SK-N-SH (cell line): ENCODE measurements at regions of chr17 and their contacts with region 1.

Region 1: DNA sequence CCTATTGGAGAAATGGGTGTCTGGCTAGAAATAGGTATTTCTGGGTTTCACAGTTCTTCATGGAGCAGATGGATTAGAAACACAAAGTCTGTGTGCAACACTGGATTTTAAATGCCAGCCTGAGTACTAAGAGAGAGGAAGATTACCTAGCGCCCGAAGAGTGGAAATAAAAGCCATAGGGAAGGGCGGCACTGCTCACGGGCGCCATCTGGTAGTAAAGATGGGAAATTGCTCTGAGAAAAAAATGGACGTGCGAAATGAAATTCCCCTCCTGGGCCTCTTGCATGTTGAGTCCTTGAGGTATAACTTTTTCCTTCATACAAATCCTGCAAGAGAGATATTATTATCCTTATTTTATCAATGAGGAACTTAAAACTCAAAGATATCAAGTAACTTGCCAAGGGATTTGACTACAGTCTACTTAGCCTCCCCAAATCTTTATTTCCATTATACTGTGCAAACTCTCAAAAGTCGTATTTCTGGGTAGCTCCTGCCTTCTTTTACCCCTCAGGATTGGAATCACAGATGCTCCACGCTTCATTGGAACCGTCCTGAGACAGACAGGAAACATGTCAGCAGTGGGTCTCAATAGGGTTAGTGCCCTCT is 72.8 kb downstream of the MMD start:
- DNase-seq: peak; percentile 57
- H3K4me3 ChIP-seq: no peak overlapping the region
- H3K27ac ChIP-seq: no peak overlapping the region
- H3K4me1 ChIP-seq: peaks cover 0 to 2% of the 10 kb centered on the region in 2 experiments; a peak in 1 of 4 replicates
- H3K27me3 ChIP-seq: no peaks in the 10 kb centered on the region
- CTCF ChIP-seq: peak; percentile 98
- EP300 ChIP-seq: no peak
- RAD21 ChIP-seq: peak; percentile 91

Region 2: DNA sequence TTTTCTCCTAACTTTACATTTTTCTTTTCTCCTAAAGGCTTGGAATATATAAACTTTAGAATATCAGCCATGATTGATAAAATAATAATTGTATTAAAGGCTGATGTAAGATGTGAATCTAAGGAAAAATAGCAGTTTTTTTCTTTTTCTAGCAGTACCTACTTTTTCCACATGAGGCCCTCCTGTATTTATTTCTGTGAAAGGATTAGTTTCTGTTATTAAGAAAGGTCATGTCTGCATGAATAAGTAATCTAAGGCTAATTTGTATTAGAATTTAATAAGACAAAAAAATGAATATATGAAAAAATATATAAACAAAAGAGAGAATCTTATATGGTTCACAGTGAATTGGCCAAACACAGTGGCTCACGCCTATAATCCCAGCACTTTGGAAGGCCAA is 295.0 kb before region 1 on chr17:
- CTCF ChIA-PET with region 1: interaction called, 14 read pairs
- POLR2A ChIA-PET with region 1: no interaction called
- DNase-seq: peak; percentile 3
- H3K4me3 ChIP-seq: no peak overlapping the region
- H3K27ac ChIP-seq: no peak overlapping the region
- H3K4me1 ChIP-seq: peaks cover 5% of the 10 kb centered on the region in 2 experiments; a peak in 3 of 4 replicates
- H3K27me3 ChIP-seq: no peaks in the 10 kb centered on the region
- CTCF ChIP-seq: peak; percentile 82
- EP300 ChIP-seq: no peak
- RAD21 ChIP-seq: peak; percentile 86

Region 3: DNA sequence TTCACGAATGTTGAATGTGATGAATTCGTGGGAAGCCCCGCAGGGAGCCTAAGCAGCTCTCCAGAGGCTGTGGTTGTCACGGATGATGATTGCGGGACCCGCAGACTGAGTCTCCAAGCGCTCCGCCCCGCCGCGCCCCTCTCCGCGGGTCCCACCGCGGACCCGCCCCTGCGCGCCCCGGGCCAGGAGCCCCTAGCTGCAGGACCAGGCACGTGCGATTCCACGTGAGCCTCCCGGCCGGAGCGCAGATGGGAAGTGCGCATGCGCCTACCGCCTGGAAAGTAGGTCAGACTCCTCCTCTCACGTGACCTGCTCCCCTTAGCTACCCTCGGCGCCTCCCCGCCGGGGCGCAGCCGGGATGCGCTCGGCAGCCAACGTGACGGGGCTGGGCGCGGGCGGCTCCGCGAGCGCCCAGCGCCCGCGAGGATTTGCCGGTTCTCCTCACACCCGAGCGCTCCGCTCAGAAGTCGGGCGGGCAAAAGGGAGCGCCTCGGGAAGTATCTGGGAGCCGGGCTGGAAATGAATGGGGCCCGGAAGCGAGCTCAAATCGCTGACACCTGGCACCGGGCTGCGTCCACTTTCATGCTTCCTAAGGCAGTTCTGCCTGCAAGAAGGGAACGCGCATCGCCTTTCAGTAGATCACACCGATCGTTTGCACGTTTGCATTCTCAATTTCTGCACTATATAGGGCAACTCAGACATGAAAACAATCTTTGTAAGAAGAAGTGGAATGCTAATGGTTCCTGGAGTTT is 110.5 kb before region 1 on chr17:
- CTCF ChIA-PET with region 1: interaction called, 30 read pairs
- POLR2A ChIA-PET with region 1: no interaction called
- DNase-seq: peak; percentile 100
- H3K4me3 ChIP-seq: peak overlapping the region; percentile 68 to 71
- H3K27ac ChIP-seq: peak overlapping the region; percentile 6 to 76; a peak in 3 of 4 replicates
- H3K4me1 ChIP-seq: peaks cover 0 to 9% of the 10 kb centered on the region in 2 experiments; a peak in 3 of 4 replicates
- H3K27me3 ChIP-seq: no peaks in the 10 kb centered on the region
- CTCF ChIP-seq: no peak
- EP300 ChIP-seq: no peak; a peak in 2 of 4 replicates
- RAD21 ChIP-seq: peak; percentile 13

Region 4: GRCh38 chr17:55303701-55304145 is 45.1 kb before region 1 on chr17:
- CTCF ChIA-PET with region 1: interaction called, 22 read pairs
- POLR2A ChIA-PET with region 1: no interaction called
- DNase-seq: no peak
- H3K4me3 ChIP-seq: no peak overlapping the region
- H3K27ac ChIP-seq: no peak overlapping the region
- H3K4me1 ChIP-seq: no peaks in the 10 kb centered on the region; a peak in 1 of 4 replicates
- H3K27me3 ChIP-seq: no peaks in the 10 kb centered on the region
- CTCF ChIP-seq: peak; percentile 38
- EP300 ChIP-seq: no peak
- RAD21 ChIP-seq: 0 out of 2 replicates have a peak, but pooled peaks have one; percentile 7

Region 5: GRCh38 chr17:55366020-55366481 is 17.2 kb after region 1 on chr17:
- CTCF ChIA-PET with region 1: interaction called, 104 read pairs
- POLR2A ChIA-PET with region 1: no interaction called
- DNase-seq: peak; percentile 60
- H3K4me3 ChIP-seq: no peak overlapping the region
- H3K27ac ChIP-seq: peak overlapping the region in 1 of 2 experiments; percentile 87; a peak in 2 of 4 replicates
- H3K4me1 ChIP-seq: peaks cover 0 to 6% of the 10 kb centered on the region in 2 experiments; a peak in 2 of 4 replicates
- H3K27me3 ChIP-seq: no peaks in the 10 kb centered on the region
- CTCF ChIP-seq: no peak
- EP300 ChIP-seq: peak in 1 of 2 experiments; percentile 92; a peak in 2 of 4 replicates
- RAD21 ChIP-seq: no peak; the same call in 1 of the 2 replicates